ENCODE measurements at regions of chr14 and their contacts with region 1.

Region 1: DNA sequence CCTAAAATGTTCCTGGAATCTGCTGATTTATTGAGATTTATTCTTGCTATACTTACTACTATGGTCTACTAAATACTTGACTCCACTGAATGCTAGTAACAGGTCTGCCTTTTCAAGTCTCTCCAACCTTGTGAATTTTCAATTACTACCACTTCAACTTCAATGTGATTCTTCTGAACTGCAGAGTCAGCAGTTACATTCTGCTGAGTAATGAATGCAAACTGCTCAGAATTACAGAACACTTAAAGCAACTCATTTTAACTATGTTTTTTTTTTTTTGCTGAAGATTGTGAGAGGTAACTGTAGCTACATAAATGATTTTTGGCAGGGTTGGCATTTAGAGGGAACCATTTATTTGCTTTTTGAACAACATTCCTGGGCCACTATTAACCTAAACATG is 41.8 kb downstream of the ARF6 start:
- DNase-seq: no peak
- ATAC-seq: no peak
- H3K4me3 ChIP-seq: no peak overlapping the region
- H3K4me3 Mint-ChIP-seq: no peak overlapping the region
- H3K27ac ChIP-seq: no peak overlapping the region
- H3K27ac Mint-ChIP-seq: no peak overlapping the region
- H3K4me1 ChIP-seq: peaks cover 12% of the 10 kb centered on the region
- H3K4me1 Mint-ChIP-seq: peaks cover 28 to 33% of the 10 kb centered on the region in 2 donors
- H3K27me3 ChIP-seq: no peaks in the 10 kb centered on the region
- H3K27me3 Mint-ChIP-seq: no peaks in the 10 kb centered on the region
- CTCF ChIP-seq: no peak

Region 2: GRCh38 chr14:49971156-49972130 is 36.8 kb after region 1 on chr14:
- intact Hi-C with region 1: loop called (anchors 5 kb)
- DNase-seq: peak in 1 of 2 donors; percentile 82
- ATAC-seq: peak; percentile 36 to 72 (median 71)
- H3K4me3 ChIP-seq: no peak overlapping the region
- H3K4me3 Mint-ChIP-seq: peak overlapping the region; percentile 82
- H3K27ac ChIP-seq: peak overlapping the region; percentile 95
- H3K27ac Mint-ChIP-seq: peak overlapping the region; percentile 92 to 95
- H3K4me1 ChIP-seq: peaks cover 40% of the 10 kb centered on the region
- H3K4me1 Mint-ChIP-seq: peaks cover 31 to 33% of the 10 kb centered on the region in 2 donors
- H3K27me3 ChIP-seq: no peaks in the 10 kb centered on the region
- H3K27me3 Mint-ChIP-seq: no peaks in the 10 kb centered on the region
- CTCF ChIP-seq: no peak

Region 3: GRCh38 chr14:50037852-50038251 is 103.2 kb after region 1 on chr14:
- intact Hi-C with region 1: no loop called
- DNase-seq: no peak
- ATAC-seq: no peak
- H3K4me3 ChIP-seq: no peak overlapping the region
- H3K4me3 Mint-ChIP-seq: no peak overlapping the region
- H3K27ac ChIP-seq: peak overlapping the region; percentile 22
- H3K27ac Mint-ChIP-seq: peak overlapping the region; percentile 87 to 95
- H3K4me1 ChIP-seq: peaks cover 57% of the 10 kb centered on the region
- H3K4me1 Mint-ChIP-seq: peaks cover 41 to 45% of the 10 kb centered on the region in 2 donors
- H3K27me3 ChIP-seq: no peaks in the 10 kb centered on the region
- H3K27me3 Mint-ChIP-seq: no peaks in the 10 kb centered on the region
- CTCF ChIP-seq: no peak